MCF 10A (cell line): ENCODE measurements at regions of chr4 and their contacts with region 1.

Region 1: GRCh38 chr4:168656055-168656660 is 159.3 kb downstream of the PALLD start:
- DNase-seq: peak; percentile 92
- H3K4me3 Mint-ChIP-seq: no peak overlapping the region
- H3K27ac Mint-ChIP-seq: peak overlapping the region; percentile 49
- H3K4me1 Mint-ChIP-seq: peaks cover 34% of the 10 kb centered on the region
- H3K27me3 Mint-ChIP-seq: no peaks in the 10 kb centered on the region
- CTCF ChIP-seq: no peak

Region 2: DNA sequence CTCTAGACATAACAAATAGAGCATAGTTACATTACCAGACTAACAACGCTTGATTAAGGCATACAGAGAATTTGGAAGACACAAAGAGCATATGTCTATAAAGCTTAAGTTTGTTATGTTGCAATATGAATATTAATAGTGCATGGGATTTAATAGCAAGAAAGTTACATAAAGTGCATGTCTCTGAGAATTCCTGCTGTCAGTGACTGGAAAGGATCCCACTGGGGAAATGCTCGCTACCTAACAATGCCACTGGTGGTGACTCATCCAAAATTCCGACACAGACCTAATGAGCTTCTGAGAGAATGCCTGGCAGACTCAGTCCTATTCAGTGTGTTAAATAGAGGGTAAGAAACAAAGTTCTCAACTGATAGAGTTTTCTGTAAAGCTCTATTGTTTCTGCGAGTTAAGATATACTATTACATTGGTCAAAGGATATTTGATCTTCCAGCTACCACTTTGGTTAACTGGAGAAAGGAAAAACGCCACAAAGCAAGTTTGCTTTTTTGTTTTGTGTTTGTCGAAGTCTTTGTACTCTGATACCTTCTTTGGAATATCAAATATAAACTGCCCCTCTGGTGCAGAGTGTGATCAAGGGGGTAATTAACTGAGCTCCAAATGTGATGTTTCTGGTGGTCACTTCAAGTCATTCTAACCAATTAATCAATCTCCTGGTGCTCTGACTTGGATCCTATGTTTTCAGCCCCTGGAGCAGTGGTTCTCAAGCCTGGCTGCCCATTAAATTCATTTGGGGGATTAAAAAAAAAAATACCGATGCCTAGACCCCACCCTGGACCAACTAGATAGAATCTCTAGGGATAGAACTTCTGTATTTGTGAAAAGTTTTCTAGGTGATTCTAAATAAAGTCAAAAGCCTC is 51.4 kb before region 1 on chr4:
- CTCF ChIA-PET with region 1: interaction called, 4 read pairs
- POLR2A ChIA-PET with region 1: interaction called, 18 read pairs
- intact Hi-C with region 1: no loop called
- DNase-seq: peak; percentile 94
- H3K4me3 Mint-ChIP-seq: no peak overlapping the region
- H3K27ac Mint-ChIP-seq: peak overlapping the region; percentile 4
- H3K4me1 Mint-ChIP-seq: peaks cover 45% of the 10 kb centered on the region
- H3K27me3 Mint-ChIP-seq: no peaks in the 10 kb centered on the region
- CTCF ChIP-seq: no peak

Region 3: DNA sequence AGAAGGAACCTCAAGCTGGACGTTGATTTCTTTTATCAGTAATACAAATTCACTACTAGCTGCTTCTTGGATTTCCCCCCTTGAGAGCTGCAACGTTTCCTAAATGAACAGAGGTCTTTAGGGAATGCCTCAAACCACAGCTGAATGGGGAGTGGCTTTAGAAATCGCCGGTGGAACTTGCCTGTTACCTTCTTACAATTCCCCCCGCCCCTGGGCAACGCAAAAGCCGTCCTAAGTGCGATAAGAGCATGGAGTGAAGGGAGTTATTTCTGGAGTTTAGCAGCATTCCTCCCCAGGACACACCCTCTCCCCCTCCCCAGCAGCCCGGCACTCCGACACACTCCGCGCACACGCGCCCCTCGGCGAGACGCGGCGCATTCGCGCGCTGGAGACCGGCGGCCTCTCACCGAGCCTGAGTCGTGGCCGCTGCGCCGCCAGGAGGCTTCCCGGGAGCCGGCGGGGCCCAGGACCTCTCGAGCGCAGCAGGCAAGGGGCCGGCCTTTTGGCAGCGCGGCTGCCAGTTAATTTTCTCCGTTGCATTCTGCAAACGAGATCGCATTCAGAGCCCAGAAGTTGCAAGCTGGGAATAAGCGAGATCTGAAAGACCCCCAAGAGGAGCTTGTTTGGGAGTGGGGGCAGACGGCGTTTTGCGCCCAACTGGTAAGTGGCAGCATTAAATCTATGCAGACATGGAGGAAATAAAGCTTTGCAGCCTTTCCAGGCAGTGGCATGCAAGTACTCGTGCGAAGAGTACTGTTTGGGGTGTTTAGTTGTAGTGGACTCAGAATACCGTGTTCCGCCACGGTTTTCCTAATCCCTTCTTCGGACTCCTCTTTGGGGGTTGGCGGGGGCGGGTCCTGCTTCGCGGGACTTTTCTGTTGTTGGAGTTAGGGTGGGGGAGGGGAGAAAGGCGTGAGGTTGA is 24.7 kb before region 1 on chr4:
- CTCF ChIA-PET with region 1: interaction called, 7 read pairs
- POLR2A ChIA-PET with region 1: interaction called, 31 read pairs
- intact Hi-C with region 1: no loop called
- DNase-seq: peak; percentile 69
- H3K4me3 Mint-ChIP-seq: peak overlapping the region; percentile 79
- H3K27ac Mint-ChIP-seq: peak overlapping the region; percentile 24
- H3K4me1 Mint-ChIP-seq: peaks cover 41% of the 10 kb centered on the region
- H3K27me3 Mint-ChIP-seq: no peaks in the 10 kb centered on the region
- CTCF ChIP-seq: peak; percentile 26

Region 4: GRCh38 chr4:168766604-168767316 is 110.6 kb after region 1 on chr4:
- CTCF ChIA-PET with region 1: no interaction called
- POLR2A ChIA-PET with region 1: no interaction called
- intact Hi-C with region 1: no loop called
- DNase-seq: peak; percentile 47
- H3K4me3 Mint-ChIP-seq: no peak overlapping the region
- H3K27ac Mint-ChIP-seq: peak overlapping the region; percentile 80
- H3K4me1 Mint-ChIP-seq: peaks cover 50% of the 10 kb centered on the region
- H3K27me3 Mint-ChIP-seq: no peaks in the 10 kb centered on the region
- CTCF ChIP-seq: no peak

Region 5: GRCh38 chr4:168853771-168854219 is 197.6 kb after region 1 on chr4:
- CTCF ChIA-PET with region 1: no interaction called
- POLR2A ChIA-PET with region 1: no interaction called
- intact Hi-C with region 1: no loop called
- DNase-seq: no peak
- H3K4me3 Mint-ChIP-seq: no peak overlapping the region
- H3K27ac Mint-ChIP-seq: peak overlapping the region; percentile 55
- H3K4me1 Mint-ChIP-seq: peaks cover 27% of the 10 kb centered on the region
- H3K27me3 Mint-ChIP-seq: no peaks in the 10 kb centered on the region
- CTCF ChIP-seq: no peak